Activated CD4-positive, alpha-beta memory T cell treated with anti-CD3 and anti-CD28 coated beads, Interleukin-2, amount 10 ng/mL, durations not matched to agents 7 days and 5 days (primary cell): ENCODE measurements at regions of chr20 and their contacts with region 1.

Region 1: GRCh38 chr20:59042796-59043660 is 442 bp upstream of the PRELID3B start:
- DNase-seq: peak; percentile 96
- H3K4me3 Mint-ChIP-seq: peak overlapping the region; percentile 90
- H3K27ac Mint-ChIP-seq: peak overlapping the region; percentile 83
- H3K4me1 Mint-ChIP-seq: peaks cover 53% of the 10 kb centered on the region
- H3K27me3 Mint-ChIP-seq: no peaks in the 10 kb centered on the region

Region 2: GRCh38 chr20:58888521-58889333 is 154.3 kb before region 1 on chr20:
- CTCF ChIA-PET with region 1: no interaction called
- POLR2A ChIA-PET with region 1: interaction called, 12 read pairs
- DNase-seq: peak; percentile 86
- H3K4me3 Mint-ChIP-seq: peak overlapping the region; percentile 77
- H3K27ac Mint-ChIP-seq: peak overlapping the region; percentile 72
- H3K4me1 Mint-ChIP-seq: peaks cover 23% of the 10 kb centered on the region
- H3K27me3 Mint-ChIP-seq: peaks cover 2% of the 10 kb centered on the region

Region 3: GRCh38 chr20:58980700-58981627 is 62.1 kb before region 1 on chr20 and contains the start of gene NELFCD:
- CTCF ChIA-PET with region 1: no interaction called
- POLR2A ChIA-PET with region 1: interaction called, 26 read pairs
- DNase-seq: peak; percentile 90
- H3K4me3 Mint-ChIP-seq: peak within 1 kb of the TSS; percentile 90
- H3K27ac Mint-ChIP-seq: peak within 1 kb of the TSS; percentile 79
- H3K4me1 Mint-ChIP-seq: peaks cover 37% of the 10 kb centered on the region
- H3K27me3 Mint-ChIP-seq: peaks cover 6% of the 10 kb centered on the region
- total RNA-seq, gene NELFCD: 63.3 to 69.0 TPM

Region 4: GRCh38 chr20:59120491-59120890 is 77.5 kb after region 1 on chr20:
- CTCF ChIA-PET with region 1: no interaction called
- POLR2A ChIA-PET with region 1: no interaction called
- DNase-seq: peak; percentile 37
- H3K4me3 Mint-ChIP-seq: no peak overlapping the region
- H3K27ac Mint-ChIP-seq: no peak overlapping the region
- H3K4me1 Mint-ChIP-seq: peaks cover 52% of the 10 kb centered on the region
- H3K27me3 Mint-ChIP-seq: peaks cover 15% of the 10 kb centered on the region

Region 5: DNA sequence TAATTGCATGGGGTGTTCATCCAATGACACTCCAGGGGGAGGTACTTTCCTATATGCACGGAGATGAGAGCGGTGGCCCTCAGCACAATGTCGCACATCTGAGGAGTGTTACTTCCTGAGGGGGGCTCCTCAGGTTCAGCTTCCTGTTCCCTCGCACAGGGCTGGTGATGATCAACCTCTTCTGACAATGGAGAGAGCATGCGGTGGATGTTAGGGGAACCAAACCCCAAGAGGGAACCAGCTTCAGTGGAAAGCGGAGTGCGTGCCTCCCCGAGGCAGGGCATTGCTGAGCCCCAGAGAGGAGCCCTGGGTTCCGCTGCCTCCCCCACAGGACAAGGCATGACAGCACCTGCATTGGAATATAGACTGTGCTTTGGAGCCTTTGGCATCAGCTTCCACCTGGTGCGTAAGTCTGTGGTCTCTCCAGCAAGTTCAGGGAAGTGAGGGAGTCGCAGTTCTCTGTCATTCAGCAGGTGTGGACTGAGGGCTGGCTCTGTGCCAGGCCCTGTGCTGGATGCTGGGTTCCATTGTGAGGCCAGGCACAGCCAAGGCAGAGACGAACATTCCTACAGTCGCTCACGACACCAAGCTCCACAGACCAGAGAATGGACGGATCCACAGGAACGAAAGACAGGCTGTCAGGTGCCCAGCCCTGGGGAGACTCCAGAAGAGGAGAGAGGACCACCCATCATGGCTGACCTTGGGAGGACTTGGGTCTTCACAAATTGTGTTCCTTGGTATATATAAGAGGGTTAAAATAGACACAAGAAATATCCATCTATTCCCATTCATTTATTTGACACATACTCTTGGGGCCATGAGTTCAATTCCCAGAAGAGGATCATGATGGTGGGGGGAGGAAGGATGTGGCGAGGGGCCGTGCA is 116.7 kb after region 1 on chr20:
- CTCF ChIA-PET with region 1: interaction called, 3 read pairs
- POLR2A ChIA-PET with region 1: interaction called, 13 read pairs
- DNase-seq: peak; percentile 70
- H3K4me3 Mint-ChIP-seq: peak overlapping the region; percentile 76
- H3K27ac Mint-ChIP-seq: peak overlapping the region; percentile 99
- H3K4me1 Mint-ChIP-seq: peaks cover 68% of the 10 kb centered on the region
- H3K27me3 Mint-ChIP-seq: peaks cover 1% of the 10 kb centered on the region